ENCODE measurements at regions of chr20 and their contacts with region 1.

Region 1: DNA sequence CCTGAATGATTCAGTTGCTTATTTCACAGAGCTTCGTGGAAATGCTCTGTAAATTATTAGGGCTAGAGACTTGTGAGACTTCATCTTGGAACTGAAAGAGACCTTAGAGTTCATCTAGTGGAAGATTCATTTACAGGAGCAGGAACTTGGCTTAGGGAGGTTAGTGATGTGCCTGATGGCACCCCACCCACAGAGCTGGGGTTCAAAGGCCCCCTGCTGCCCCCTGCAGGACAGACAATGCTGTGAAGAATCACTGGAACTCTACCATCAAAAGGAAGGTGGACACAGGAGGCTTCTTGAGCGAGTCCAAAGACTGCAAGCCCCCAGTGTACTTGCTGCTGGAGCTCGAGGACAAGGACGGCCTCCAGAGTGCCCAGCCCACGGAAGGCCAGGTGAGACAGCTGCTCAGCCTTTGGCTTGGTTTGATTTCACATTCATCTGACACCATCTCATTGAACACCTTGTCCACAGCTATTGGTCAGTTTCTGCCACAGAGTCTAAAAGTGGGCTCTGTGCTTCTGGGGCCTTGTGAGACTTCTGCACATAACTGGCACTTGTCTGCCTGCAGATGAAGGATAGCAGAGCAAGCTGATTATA is 25.1 kb downstream of the MYBL2 start:
- ATAC-seq: peak in 3 of 8 experiments; percentile 79 to 85 (median 80)
- H3K4me3 ChIP-seq: no peak overlapping the region
- H3K27ac ChIP-seq: no peak overlapping the region
- H3K4me1 ChIP-seq: no peaks in the 10 kb centered on the region

Region 2: DNA sequence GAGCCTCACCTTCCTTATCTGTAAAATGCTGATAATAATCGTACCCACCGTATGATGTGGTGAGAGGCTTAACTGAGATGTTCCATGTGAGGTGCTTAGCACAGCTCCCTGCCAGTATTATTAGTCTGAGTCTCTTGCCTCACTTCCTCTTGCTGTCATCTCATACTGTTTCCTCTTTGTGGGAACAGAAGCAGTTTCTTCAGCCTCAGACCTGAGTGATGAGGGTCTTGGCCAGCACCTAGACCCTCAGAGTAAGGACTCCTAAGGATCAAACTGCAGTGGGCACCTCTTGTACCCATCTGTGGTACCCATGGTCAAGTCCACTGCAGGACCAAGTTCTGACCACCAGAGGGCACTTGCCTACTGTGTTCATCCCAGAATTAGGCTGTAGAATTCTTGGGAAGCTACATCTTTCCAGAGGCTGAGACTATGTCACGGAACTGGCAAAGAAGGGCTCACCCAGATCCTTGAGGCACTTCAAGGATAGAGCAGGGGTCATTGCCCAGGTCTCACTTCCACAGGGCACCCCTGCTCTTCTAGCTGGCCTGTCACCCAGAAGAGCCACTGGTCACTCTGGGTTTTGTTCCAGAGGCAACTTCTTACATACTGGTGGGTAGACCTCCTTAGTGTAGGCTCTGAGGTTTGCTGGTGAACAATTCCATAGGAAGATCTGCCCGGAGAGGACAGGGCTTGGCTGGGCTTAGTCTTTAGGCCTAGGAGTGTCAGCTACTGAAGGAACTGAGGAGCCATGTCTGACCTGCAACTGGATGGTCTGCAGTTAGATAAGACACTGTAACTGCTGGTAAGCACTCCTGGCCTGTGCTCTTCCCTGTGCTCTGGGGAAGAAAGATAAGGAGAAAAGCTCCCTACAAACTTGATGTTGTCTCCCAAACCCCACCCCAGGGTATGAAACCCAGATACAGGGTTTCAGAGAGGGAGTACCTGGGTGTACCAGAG is 153.8 kb before region 1 on chr20:
- in situ Hi-C with region 1: loop called in 1 of 9 experiments (anchors 10 kb)
- ATAC-seq: peak; percentile 46 to 92 (median 72)
- H3K4me3 ChIP-seq: no peak overlapping the region
- H3K27ac ChIP-seq: no peak overlapping the region
- H3K4me1 ChIP-seq: no peaks in the 10 kb centered on the region